Posterior cingulate gyrus (tissue), 11 donors: ENCODE measurements at regions of chr2 and their contacts with region 1.

Region 1: GRCh38 chr2:160984426-160985077 is 175.7 kb upstream of the TANK start:
- DNase-seq: no peak

Region 2: GRCh38 chr2:160429248-160430000 is 555.1 kb before region 1 on chr2:
- intact Hi-C with region 1: loop called (anchors 10 kb)
- DNase-seq: no peak

Region 3: DNA sequence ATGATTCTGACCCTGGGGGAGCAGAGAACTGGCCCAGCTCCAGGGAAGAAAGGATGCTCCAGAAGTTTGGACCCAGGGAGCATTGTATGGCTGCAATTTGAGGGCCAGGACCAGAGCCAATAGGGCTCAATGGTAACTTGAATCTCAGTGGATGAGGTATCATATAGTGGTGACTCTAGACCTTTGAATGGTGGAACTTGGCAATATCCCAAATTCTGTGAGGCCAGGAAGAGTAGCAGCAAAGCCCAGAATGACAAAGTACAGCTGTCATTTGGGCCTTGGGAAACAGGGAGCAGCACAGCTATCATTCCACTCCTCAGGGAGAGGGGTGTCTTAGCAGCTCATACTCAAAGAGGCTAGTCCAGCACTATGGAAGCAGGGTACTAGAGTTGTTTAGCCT is 158.1 kb before region 1 on chr2:
- intact Hi-C with region 1: no loop called
- DNase-seq: no peak

Region 4: GRCh38 chr2:161139098-161139987 is 154.8 kb after region 1 on chr2:
- intact Hi-C with region 1: no loop called
- DNase-seq: no peak